ENCODE measurements at regions of chr18 and their contacts with region 1.

Region 1: DNA sequence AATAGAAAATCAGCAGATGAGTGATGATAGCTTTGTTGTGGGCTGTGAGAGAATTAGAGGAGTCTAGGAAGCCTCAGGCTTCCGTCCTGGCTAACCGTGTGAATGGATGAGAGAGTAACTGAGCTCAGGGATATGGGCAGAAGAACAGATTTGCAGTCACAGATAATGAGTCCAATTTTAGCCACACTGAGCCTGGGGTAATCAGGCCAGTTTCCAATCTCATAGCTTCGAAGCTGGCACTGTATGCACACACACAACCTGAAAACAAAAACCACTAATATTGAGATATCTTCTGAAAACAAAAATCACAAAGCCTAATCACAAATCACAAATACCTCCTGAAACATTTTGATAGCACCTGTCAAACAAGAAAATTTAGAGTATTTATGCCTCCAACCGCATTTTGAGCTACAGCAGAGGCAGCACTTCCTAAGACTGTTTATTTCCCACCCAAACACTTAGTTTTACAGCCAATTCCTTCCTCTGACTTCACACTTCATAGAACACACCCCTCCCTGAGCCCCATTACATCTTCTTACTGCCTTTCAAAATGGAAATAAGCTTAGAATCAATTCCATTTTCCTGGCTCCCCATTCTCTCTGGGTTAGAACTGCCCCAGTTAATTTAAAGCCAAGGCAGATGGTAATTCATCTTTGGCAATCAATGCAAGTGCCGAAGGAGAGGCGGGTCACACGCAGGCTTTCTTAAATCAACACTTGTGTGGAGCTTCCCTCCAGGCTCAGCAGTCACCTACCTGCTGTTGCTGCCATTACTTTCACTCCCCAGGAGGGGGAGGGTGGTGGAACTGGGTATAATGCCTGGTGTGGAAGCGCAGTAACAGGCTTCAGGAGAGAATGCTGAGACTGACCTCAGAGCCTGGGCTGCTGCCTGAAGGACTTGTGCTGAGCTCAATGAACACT is 18.9 kb downstream of the TTR start:
- DNase-seq: no peak
- ATAC-seq: peak in 6 of 8 donors; percentile 62 to 78 (median 66)
- H3K4me3 ChIP-seq: no peak overlapping the region
- H3K27ac ChIP-seq: peak overlapping the region in 4 of 10 donors; percentile 15 to 68 (median 48)
- H3K4me1 ChIP-seq: peaks cover 0 to 19% (median 6%) of the 10 kb centered on the region in 9 donors
- H3K27me3 ChIP-seq: no peaks in the 10 kb centered on the region
- CTCF ChIP-seq: peak in 4 of 9 donors; percentile 10 to 25 (median 20)

Region 2: DNA sequence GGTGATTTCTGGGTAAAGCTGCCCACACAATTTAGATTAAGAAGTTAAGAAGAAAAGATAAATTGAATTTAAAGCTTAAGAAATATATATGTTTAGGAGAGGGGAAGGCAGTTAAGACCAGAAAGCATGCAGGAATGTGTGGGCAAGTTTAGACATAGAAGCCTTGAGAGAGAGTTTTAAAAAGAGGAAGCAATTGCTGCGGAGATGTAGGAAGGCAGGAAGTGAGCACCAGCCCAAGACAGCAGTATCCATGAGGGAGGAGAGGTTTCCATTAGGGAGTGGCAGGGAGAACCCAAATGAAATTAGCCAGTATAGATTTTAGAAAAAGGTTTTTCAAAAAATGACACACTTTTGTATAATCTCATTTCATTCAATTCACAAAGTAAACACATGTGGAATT is 532.7 kb before region 1 on chr18:
- intact Hi-C with region 1: no loop called
- DNase-seq: no peak
- ATAC-seq: no peak
- H3K4me3 ChIP-seq: no peak overlapping the region
- H3K27ac ChIP-seq: no peak overlapping the region
- H3K4me1 ChIP-seq: no peaks in the 10 kb centered on the region
- H3K27me3 ChIP-seq: no peaks in the 10 kb centered on the region
- CTCF ChIP-seq: no peak

Region 3: DNA sequence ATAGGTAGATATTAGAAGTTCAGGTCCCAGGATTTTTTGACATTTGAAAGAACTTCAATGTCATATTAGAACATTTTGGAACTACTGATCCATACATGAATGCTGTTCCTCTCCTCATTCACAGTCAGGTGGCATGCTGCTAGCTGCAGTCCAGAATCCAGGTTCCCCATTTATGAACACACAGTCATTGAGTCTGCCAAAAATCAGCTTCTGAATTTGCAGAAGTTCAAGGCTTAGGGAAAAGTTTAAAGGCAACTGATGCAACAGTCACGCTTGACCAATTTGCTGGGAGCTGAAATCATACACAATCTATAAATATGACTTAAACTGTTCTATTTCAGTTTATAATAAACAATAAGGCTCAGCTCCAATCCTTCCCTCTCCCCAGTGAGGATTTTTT is 36.2 kb before region 1 on chr18:
- intact Hi-C with region 1: loop called in 1 of 10 experiments (anchors 5 kb)
- DNase-seq: no peak
- ATAC-seq: no peak
- H3K4me3 ChIP-seq: no peak overlapping the region
- H3K27ac ChIP-seq: no peak overlapping the region
- H3K4me1 ChIP-seq: no peaks in the 10 kb centered on the region
- H3K27me3 ChIP-seq: no peaks in the 10 kb centered on the region
- CTCF ChIP-seq: no peak

Region 4: DNA sequence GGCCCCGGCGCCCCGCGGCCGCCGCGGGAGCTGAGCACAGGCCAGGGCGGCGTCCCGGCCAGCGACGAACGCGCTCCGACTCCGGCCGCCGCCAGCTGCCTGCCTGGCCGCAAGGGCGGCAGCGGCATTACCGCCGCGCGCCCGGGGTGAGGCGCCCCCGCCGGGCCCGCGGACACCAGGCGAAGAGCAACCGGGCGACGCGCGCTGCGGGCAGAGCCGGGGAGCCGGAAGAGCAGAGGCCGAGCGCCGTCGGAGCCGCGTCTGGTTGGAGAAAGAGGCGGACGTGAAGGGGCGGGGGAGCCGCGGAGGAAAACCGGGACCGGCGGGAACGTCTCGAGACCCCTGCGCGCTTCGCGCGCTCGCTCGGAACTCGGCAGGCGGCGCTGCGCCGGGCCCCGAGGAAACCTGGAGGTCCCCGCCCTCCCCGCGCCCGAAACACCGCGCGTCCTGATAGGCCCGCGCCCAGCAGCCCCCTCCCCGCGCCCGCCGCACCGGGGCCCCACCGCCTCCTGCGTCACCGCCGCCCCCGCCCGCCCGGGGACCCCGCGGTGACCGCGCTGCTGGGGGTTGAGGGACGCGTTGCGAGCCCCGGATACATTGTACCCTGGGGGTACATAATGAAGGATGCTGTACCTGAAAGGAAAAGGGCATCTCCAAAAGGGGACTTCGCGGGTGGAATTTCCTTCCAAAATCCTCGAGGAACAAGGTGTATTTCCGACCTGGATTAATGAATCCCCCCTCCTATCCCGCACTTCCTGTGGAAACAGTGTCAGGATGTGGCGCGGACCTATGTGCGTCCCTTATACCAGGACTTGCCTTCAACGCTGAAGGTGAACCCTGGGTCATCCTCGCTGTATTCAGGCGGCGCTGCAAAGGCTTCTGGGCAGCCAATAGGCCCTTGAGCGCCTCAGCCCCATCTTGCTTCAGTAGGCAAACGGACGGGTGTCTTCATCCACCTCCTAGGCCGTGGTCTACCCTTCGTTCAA is 74.8 kb after region 1 on chr18:
- intact Hi-C with region 1: loop called in 1 of 10 experiments (anchors 10 kb)
- DNase-seq: peak; percentile 62 to 70
- ATAC-seq: peak; percentile 83 to 93 (median 88)
- H3K4me3 ChIP-seq: peak overlapping the region; percentile 8 to 73 (median 66)
- H3K27ac ChIP-seq: peak overlapping the region in 9 of 10 donors; percentile 48 to 83 (median 70)
- H3K4me1 ChIP-seq: peaks cover 0 to 17% (median 9%) of the 10 kb centered on the region in 9 donors
- H3K27me3 ChIP-seq: peaks cover 0 to 17% (median 0%) of the 10 kb centered on the region in 7 donors
- CTCF ChIP-seq: peak in 7 of 9 donors; percentile 29 to 66 (median 56)